ENCODE measurements at regions of chr4 and their contacts with region 1.

Region 1: GRCh38 chr4:4488405-4489404 is 53.1 kb downstream of the STX18 start:
- DNase-seq: peak; percentile 63
- ATAC-seq: peak; percentile 89
- H3K4me3 ChIP-seq: no peak overlapping the region
- H3K27ac ChIP-seq: 0 out of 2 replicates have a peak overlapping the region, but pooled peaks have one; percentile 9
- H3K4me1 ChIP-seq: peaks cover 23% of the 10 kb centered on the region; the same call in 1 of the 2 replicates
- H3K27me3 ChIP-seq: no peaks in the 10 kb centered on the region
- CTCF ChIP-seq: peak; percentile 86 to 95 (median 94)
- EP300 ChIP-seq: no peak
- POLR2A ChIP-seq: no peak
- RAD21 ChIP-seq: peak; percentile 96

Region 2: DNA sequence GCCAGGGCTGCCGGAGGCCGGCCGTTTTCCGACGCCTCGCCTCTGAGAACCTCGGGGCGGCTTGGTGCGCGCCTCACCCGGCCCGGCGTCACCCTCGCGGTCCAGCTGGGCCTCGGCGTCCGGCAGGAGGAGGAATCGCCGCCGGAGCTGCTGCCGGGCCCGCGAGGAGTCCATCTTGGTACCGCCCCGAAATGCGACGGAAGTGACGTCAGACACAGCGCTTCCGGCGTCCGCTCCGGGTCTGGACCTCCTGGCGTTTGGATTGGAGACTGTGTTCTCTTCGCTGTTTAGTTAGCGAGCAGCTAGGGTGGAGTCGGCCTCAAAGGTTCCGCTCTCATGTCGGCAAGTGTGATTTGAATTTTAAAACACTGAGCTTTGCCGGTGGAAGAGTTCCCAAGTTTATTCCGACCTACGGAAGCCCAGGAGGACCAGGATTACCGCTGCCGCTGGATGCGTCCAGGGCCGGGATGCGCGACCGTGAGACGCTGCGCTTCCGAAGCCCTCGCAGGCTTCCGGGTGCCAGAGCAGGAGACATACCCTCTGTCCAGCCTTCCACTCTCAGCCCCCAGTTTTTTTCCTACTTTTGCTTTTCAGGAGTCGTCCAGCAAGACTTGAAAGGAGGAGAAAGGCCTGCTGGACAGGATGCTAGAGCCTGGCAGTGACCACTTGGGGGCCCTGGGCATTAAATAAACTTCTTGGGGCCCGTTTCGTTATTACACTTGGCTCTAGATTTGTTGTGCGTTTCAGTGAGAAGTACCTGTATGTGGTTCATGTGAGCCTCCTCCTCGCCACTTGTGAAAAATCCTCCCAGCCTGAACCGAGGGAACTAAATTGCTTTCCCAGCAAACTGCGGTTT is 240.4 kb before region 1 on chr4 and contains the start of gene TMEM128:
- CTCF ChIA-PET with region 1: no interaction called
- POLR2A ChIA-PET with region 1: no interaction called
- RAD21 ChIA-PET with region 1: no interaction called
- SMC1A ChIA-PET with region 1: no interaction called
- in situ Hi-C with region 1: no loop called
- intact Hi-C with region 1: no loop called
- DNase-seq: peak; percentile 65
- ATAC-seq: peak; percentile 97
- H3K4me3 ChIP-seq: peak within 1 kb of the TSS; percentile 97
- H3K27ac ChIP-seq: peak within 1 kb of the TSS; percentile 84
- H3K4me1 ChIP-seq: peaks cover 7% of the 10 kb centered on the region
- H3K27me3 ChIP-seq: no peaks in the 10 kb centered on the region
- CTCF ChIP-seq: 0 out of 6 replicates have a peak, but pooled peaks of 1 of the 3 experiments have one; percentile 8
- EP300 ChIP-seq: no peak
- POLR2A ChIP-seq: peak; percentile 98
- RAD21 ChIP-seq: no peak
- polyA plus RNA-seq, gene TMEM128: 9.3 to 18.2 TPM

Region 3: GRCh38 chr4:4430492-4431197 is 58.1 kb before region 1 on chr4:
- CTCF ChIA-PET with region 1: no interaction called
- POLR2A ChIA-PET with region 1: no interaction called
- RAD21 ChIA-PET with region 1: no interaction called
- SMC1A ChIA-PET with region 1: no interaction called
- in situ Hi-C with region 1: no loop called
- intact Hi-C with region 1: no loop called
- DNase-seq: no peak
- ATAC-seq: peak; percentile 98
- H3K4me3 ChIP-seq: no peak overlapping the region
- H3K27ac ChIP-seq: no peak overlapping the region
- H3K4me1 ChIP-seq: no peaks in the 10 kb centered on the region
- H3K27me3 ChIP-seq: no peaks in the 10 kb centered on the region
- CTCF ChIP-seq: peak; percentile 62 to 71 (median 66); a peak in 5 of 6 replicates
- EP300 ChIP-seq: no peak
- POLR2A ChIP-seq: no peak
- RAD21 ChIP-seq: peak; percentile 29

Region 4: GRCh38 chr4:4446434-4446833 is 42.3 kb before region 1 on chr4:
- CTCF ChIA-PET with region 1: no interaction called
- POLR2A ChIA-PET with region 1: no interaction called
- RAD21 ChIA-PET with region 1: no interaction called
- SMC1A ChIA-PET with region 1: no interaction called
- in situ Hi-C with region 1: no loop called
- intact Hi-C with region 1: no loop called
- DNase-seq: no peak
- ATAC-seq: no peak
- H3K4me3 ChIP-seq: no peak overlapping the region
- H3K27ac ChIP-seq: no peak overlapping the region
- H3K4me1 ChIP-seq: no peaks in the 10 kb centered on the region
- H3K27me3 ChIP-seq: no peaks in the 10 kb centered on the region
- CTCF ChIP-seq: no peak
- EP300 ChIP-seq: no peak
- POLR2A ChIP-seq: no peak
- RAD21 ChIP-seq: no peak

Region 5: GRCh38 chr4:4502694-4503311 is 14.1 kb after region 1 on chr4:
- CTCF ChIA-PET with region 1: interaction called, 34 read pairs
- POLR2A ChIA-PET with region 1: no interaction called
- RAD21 ChIA-PET with region 1: interaction called, 14 read pairs
- SMC1A ChIA-PET with region 1: interaction called, 35 read pairs
- in situ Hi-C with region 1: no loop called
- intact Hi-C with region 1: no loop called
- DNase-seq: no peak
- ATAC-seq: peak; percentile 90
- H3K4me3 ChIP-seq: peak overlapping the region; percentile 52
- H3K27ac ChIP-seq: peak overlapping the region; percentile 80
- H3K4me1 ChIP-seq: peaks cover 9% of the 10 kb centered on the region
- H3K27me3 ChIP-seq: no peaks in the 10 kb centered on the region
- CTCF ChIP-seq: no peak
- EP300 ChIP-seq: no peak
- POLR2A ChIP-seq: no peak; the same call in 1 of the 2 replicates
- RAD21 ChIP-seq: no peak

Region 6: DNA sequence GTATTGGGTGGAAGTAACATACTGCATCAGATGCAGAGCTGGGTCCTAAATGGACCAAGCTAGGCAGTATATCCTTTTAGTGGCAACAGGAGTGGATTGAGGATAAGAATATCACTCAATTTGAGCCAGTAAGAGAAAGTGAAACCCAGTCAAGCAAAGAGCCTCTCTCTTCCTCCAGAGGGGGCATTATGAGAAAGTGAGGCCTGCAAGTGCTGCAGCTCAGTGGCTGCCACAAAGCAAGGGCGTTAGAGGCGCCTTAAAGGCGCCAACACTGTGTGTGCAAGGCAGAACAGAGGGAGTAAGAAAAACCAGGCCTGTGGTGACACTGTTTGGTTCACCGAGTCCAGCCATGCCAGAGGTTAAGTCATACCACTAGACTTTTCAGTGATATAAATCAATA is 35.7 kb after region 1 on chr4:
- CTCF ChIA-PET with region 1: interaction called, 36 read pairs
- POLR2A ChIA-PET with region 1: interaction called, 4 read pairs
- RAD21 ChIA-PET with region 1: interaction called, 58 read pairs
- SMC1A ChIA-PET with region 1: interaction called, 131 read pairs
- in situ Hi-C with region 1: no loop called
- intact Hi-C with region 1: loop called (anchors 1 kb)
- DNase-seq: peak; percentile 76
- ATAC-seq: peak; percentile 98
- H3K4me3 ChIP-seq: peak overlapping the region; percentile 42
- H3K27ac ChIP-seq: peak overlapping the region; percentile 76
- H3K4me1 ChIP-seq: peaks cover 30% of the 10 kb centered on the region
- H3K27me3 ChIP-seq: no peaks in the 10 kb centered on the region
- CTCF ChIP-seq: peak; percentile 37 to 44 (median 43); a peak in 5 of 6 replicates
- EP300 ChIP-seq: peak in 1 of 2 experiments; percentile 59; a peak in 1 of 4 replicates
- POLR2A ChIP-seq: no peak
- RAD21 ChIP-seq: peak; percentile 28; the same call in 1 of the 2 replicates

Region 7: DNA sequence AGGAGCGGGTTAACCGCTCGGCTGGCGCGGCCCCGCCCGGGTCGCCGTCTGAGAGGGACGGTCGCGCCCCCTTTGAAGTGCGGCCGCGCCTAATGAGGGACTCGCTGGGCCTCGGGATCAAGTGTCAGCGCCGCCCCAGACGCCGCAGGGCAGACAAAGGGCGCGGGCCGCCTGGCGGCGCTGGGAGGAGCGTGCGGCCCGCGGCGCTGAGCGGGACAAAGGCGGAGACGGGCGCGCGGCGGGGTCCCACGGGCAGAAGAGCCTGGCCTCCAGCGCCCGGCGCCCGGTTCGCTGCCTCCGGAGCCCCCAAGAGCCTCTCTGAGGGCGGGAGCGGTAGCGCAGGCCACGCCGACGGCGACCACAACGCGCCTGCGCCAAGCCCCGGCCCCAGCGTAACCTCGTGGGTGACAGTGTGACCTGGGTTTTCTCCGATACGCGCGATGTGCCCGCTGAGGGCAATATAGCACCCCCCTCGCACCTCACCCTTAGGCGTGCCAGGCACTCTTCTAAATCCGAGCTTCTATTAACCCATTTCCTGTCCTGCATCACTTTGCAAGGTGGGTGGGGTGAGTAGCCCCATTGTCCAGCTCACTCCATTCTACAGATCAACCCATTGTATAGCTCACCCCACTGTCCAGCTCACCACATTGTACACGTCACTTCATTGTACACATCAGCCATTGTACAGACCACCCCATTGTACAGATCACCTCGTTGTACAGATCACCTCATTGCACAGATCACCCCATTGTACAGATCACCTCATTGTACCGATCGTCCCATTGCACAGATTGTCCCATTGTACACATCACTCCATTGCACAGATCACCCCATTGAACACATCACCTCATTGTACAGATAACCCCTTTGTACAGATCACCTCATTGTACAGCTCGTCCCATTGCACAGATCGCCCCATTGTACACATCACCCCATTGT is 86.8 kb after region 1 on chr4:
- CTCF ChIA-PET with region 1: interaction called, 4 read pairs
- POLR2A ChIA-PET with region 1: no interaction called
- RAD21 ChIA-PET with region 1: no interaction called
- SMC1A ChIA-PET with region 1: interaction called, 4 read pairs
- in situ Hi-C with region 1: no loop called
- intact Hi-C with region 1: loop called (anchors 1 kb)
- DNase-seq: peak; percentile 9
- ATAC-seq: peak; percentile 94
- H3K4me3 ChIP-seq: peak overlapping the region; percentile 76
- H3K27ac ChIP-seq: peak overlapping the region; percentile 24
- H3K4me1 ChIP-seq: peaks cover 5% of the 10 kb centered on the region
- H3K27me3 ChIP-seq: no peaks in the 10 kb centered on the region
- CTCF ChIP-seq: peak; percentile 25 to 41 (median 27); a peak in 2 of 6 replicates
- EP300 ChIP-seq: no peak
- POLR2A ChIP-seq: peak; percentile 61
- RAD21 ChIP-seq: 0 out of 2 replicates have a peak, but pooled peaks have one; percentile 19

Region 8: GRCh38 chr4:4762909-4763821 is 274.5 kb after region 1 on chr4:
- CTCF ChIA-PET with region 1: interaction called, 21 read pairs
- POLR2A ChIA-PET with region 1: interaction called, 3 read pairs
- RAD21 ChIA-PET with region 1: interaction called, 4 read pairs
- SMC1A ChIA-PET with region 1: interaction called, 7 read pairs
- in situ Hi-C with region 1: loop called (anchors 5 kb)
- intact Hi-C with region 1: loop called (anchors 1 kb)
- DNase-seq: peak; percentile 86
- ATAC-seq: peak; percentile 91
- H3K4me3 ChIP-seq: peak overlapping the region; percentile 46; the same call in 1 of the 2 replicates
- H3K27ac ChIP-seq: peak overlapping the region; percentile 71
- H3K4me1 ChIP-seq: peaks cover 34% of the 10 kb centered on the region
- H3K27me3 ChIP-seq: no peaks in the 10 kb centered on the region
- CTCF ChIP-seq: no peak
- EP300 ChIP-seq: peak; percentile 75 to 79; a peak in 3 of 4 replicates
- POLR2A ChIP-seq: no peak
- RAD21 ChIP-seq: no peak

Region 9: DNA sequence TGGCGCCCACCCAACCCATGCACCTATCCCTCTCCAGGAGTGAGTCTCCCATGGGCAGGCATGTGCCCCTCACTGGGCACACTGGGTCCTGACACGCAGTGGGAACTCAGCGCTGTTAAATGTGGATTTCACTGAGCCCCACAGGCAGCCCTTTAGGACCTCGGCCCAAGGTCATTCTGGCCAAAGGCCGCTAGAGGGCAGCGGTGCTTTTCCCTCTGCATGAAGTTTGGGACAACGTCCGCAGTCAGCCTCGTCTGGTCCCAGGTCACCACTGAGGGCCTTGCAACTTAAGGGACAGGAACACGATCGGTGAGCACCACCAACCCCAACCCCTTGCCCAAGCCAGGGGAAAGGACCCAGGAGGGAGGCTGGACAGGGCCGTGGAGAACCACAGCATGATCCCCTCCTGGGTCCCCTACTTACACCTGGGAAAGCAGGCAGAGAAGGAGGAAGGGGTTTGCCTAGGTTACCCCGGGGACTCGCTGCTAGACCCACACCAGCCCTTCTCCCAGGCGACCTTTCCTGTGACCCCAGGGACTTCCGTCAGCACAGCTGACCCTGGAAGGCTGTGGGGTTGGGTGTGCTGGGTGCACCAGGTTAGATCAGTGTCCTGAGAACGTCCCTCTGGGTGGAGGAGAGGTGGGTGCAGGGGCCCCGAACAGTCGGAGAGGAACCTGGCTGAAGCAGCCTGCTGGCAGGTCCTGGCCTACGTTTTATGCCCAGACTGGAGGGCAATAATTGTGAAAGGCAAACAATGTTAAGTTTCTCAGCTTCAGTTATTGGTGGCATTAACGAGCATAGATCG is 506.6 kb after region 1 on chr4:
- CTCF ChIA-PET with region 1: no interaction called
- POLR2A ChIA-PET with region 1: no interaction called
- RAD21 ChIA-PET with region 1: no interaction called
- SMC1A ChIA-PET with region 1: no interaction called
- in situ Hi-C with region 1: loop called (anchors 5 kb)
- intact Hi-C with region 1: loop called (anchors 1 kb)
- DNase-seq: no peak
- ATAC-seq: peak; percentile 94
- H3K4me3 ChIP-seq: no peak overlapping the region
- H3K27ac ChIP-seq: no peak overlapping the region
- H3K4me1 ChIP-seq: no peaks in the 10 kb centered on the region
- H3K27me3 ChIP-seq: no peaks in the 10 kb centered on the region
- CTCF ChIP-seq: peak; percentile 85 to 93 (median 91)
- EP300 ChIP-seq: no peak
- POLR2A ChIP-seq: no peak
- RAD21 ChIP-seq: peak; percentile 80

Measured in GM12878 (cell line).